Pancreas (tissue), 10 donors: ENCODE measurements at regions of chr14 and their contacts with region 1.

Region 1: GRCh38 chr14:64823305-64823861 is 56.3 kb downstream of the SPTB start:
- DNase-seq: peak; percentile 69 to 94 (median 84)
- ATAC-seq: peak; percentile 98 to 100 (median 99)
- H3K4me3 ChIP-seq: peak overlapping the region in 1 of 4 donors; percentile 26
- H3K27ac ChIP-seq: no peak overlapping the region
- H3K4me1 ChIP-seq: no peaks in the 10 kb centered on the region
- H3K27me3 ChIP-seq: no peaks in the 10 kb centered on the region
- CTCF ChIP-seq: peak; percentile 66 to 84 (median 76)

Region 2: GRCh38 chr14:64764641-64765520 is 58.5 kb before region 1 on chr14:
- intact Hi-C with region 1: no loop called
- DNase-seq: peak in 5 of 6 donors; percentile 59 to 88 (median 78)
- ATAC-seq: peak; percentile 57 to 77 (median 76)
- H3K4me3 ChIP-seq: peak overlapping the region in 2 of 4 donors; percentile 25 to 34
- H3K27ac ChIP-seq: no peak overlapping the region
- H3K4me1 ChIP-seq: peaks cover 15 to 40% (median 21%) of the 10 kb centered on the region in 3 donors
- H3K27me3 ChIP-seq: no peaks in the 10 kb centered on the region
- CTCF ChIP-seq: peak; percentile 74 to 92 (median 89)

Region 3: GRCh38 chr14:64880221-64881121 is 57.1 kb after region 1 on chr14:
- intact Hi-C with region 1: loop called in 2 of 3 experiments (anchors 5 to 10 kb)
- DNase-seq: peak; percentile 48 to 82 (median 58)
- ATAC-seq: peak; percentile 85 to 93 (median 90)
- H3K4me3 ChIP-seq: peak overlapping the region; percentile 45 to 64 (median 50)
- H3K27ac ChIP-seq: peak overlapping the region in 1 of 4 donors; percentile 41
- H3K4me1 ChIP-seq: no peaks in the 10 kb centered on the region
- H3K27me3 ChIP-seq: no peaks in the 10 kb centered on the region
- CTCF ChIP-seq: no peak

Region 4: DNA sequence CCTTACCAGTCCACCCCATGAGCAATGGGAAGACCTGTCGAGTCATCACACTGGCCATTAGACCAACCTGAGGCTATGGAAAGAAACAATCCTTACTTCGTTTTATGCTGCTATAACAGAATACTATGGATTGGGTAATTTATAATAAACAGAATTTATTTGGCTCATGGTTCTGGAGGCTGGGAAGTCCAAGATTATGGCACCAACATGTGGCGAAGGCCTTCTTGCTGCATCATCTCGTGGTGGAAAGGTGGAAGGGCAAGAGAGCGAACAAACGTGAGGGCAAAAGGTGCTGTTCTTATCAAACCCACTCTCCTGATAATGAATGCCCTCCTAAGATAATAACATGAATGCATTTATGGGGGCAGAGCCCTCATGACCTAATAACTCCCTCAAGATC is 66.0 kb after region 1 on chr14:
- intact Hi-C with region 1: loop called in 2 of 3 experiments (anchors 5 to 10 kb)
- DNase-seq: no peak
- ATAC-seq: no peak
- H3K4me3 ChIP-seq: no peak overlapping the region
- H3K27ac ChIP-seq: no peak overlapping the region
- H3K4me1 ChIP-seq: no peaks in the 10 kb centered on the region
- H3K27me3 ChIP-seq: no peaks in the 10 kb centered on the region
- CTCF ChIP-seq: no peak

Region 5: GRCh38 chr14:64971943-64972791 is 148.8 kb after region 1 on chr14 and contains the start of gene RAB15:
- intact Hi-C with region 1: loop called in 1 of 3 experiments (anchors 10 kb)
- DNase-seq: peak; percentile 29 to 82 (median 48)
- ATAC-seq: peak; percentile 71 to 89 (median 80)
- H3K4me3 ChIP-seq: peak within 1 kb of the TSS; percentile 34 to 82 (median 76)
- H3K27ac ChIP-seq: no peak within 1 kb of the TSS
- H3K4me1 ChIP-seq: peaks cover 0 to 10% (median 0%) of the 10 kb centered on the region in 3 donors
- H3K27me3 ChIP-seq: no peaks in the 10 kb centered on the region
- CTCF ChIP-seq: no peak
- total RNA-seq, gene RAB15: 4.6 to 18.8 (median 6.4) TPM

Region 6: DNA sequence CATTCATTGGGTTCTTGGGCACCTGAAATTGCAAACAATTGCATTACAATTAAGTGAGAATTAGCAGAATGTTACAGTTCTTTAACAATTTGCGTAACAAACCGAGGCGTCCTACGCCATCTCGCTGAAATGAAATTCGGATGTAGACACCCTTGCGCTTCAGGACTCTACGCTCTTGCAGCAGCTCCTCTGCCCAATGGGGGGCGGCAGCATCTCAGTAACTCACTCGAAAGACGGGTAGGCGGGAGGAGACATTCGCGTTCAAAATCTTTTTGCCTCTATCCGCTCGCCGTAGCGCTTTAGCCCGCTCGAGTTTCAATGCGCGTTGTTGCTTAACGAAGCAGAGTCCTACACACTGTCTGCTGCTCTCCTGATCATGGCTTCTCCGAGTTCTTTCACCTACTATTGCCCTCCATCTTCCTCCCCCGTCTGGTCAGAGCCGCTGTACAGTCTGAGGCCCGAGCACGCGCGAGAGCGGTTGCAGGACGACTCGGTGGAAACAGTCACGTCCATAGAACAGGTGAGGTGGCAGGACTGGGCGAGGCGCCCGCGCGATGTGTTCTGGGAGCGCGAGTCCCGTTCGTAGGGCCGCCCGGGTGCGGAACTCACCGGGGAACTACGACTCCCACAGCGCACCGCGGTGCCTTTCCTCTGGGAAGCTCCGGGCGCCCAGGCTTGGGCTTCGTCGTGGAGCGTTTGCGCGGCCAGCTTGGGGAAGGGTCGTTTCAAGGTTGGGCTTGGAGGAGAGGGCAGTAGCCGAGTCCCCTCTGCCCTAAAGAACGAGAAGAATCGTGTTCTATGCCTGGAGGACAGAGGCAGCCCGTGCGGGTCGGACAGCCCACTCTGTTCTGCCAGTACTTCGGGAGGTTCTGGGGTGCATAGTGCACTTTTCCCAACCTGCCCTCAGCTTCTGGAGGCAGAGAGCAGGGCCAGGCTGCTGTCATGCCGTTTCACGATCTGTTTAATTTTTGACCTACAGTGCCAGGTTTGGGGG is 163.5 kb after region 1 on chr14 and contains the start of gene FNTB:
- intact Hi-C with region 1: loop called in 1 of 3 experiments (anchors 10 kb)
- DNase-seq: peak; percentile 93 to 97 (median 96)
- ATAC-seq: peak; percentile 96 to 99 (median 98)
- H3K4me3 ChIP-seq: peak within 1 kb of the TSS; percentile 32 to 69 (median 62)
- H3K27ac ChIP-seq: peak within 1 kb of the TSS; percentile 60 to 91 (median 74)
- H3K4me1 ChIP-seq: peaks cover 7 to 16% (median 10%) of the 10 kb centered on the region in 3 donors
- H3K27me3 ChIP-seq: no peaks in the 10 kb centered on the region
- CTCF ChIP-seq: peak; percentile 24 to 61 (median 36)
- total RNA-seq, gene FNTB: 4.9 to 9.5 (median 6.7) TPM